Activated CD4-positive, alpha-beta T cell treated with anti-CD3 and anti-CD28 coated beads for 36 hours (primary cell): ENCODE measurements at regions of chr1 and their contacts with region 1.

Region 1: GRCh38 chr1:209747580-209748262 is 8.1 kb upstream of the TRAF3IP3 start:
- DNase-seq: peak; percentile 93
- ATAC-seq: peak; percentile 74
- H3K4me3 Mint-ChIP-seq: peak overlapping the region; percentile 65
- H3K27ac Mint-ChIP-seq: peak overlapping the region; percentile 92
- H3K4me1 Mint-ChIP-seq: peaks cover 70% of the 10 kb centered on the region
- H3K27me3 Mint-ChIP-seq: no peaks in the 10 kb centered on the region

Region 2: DNA sequence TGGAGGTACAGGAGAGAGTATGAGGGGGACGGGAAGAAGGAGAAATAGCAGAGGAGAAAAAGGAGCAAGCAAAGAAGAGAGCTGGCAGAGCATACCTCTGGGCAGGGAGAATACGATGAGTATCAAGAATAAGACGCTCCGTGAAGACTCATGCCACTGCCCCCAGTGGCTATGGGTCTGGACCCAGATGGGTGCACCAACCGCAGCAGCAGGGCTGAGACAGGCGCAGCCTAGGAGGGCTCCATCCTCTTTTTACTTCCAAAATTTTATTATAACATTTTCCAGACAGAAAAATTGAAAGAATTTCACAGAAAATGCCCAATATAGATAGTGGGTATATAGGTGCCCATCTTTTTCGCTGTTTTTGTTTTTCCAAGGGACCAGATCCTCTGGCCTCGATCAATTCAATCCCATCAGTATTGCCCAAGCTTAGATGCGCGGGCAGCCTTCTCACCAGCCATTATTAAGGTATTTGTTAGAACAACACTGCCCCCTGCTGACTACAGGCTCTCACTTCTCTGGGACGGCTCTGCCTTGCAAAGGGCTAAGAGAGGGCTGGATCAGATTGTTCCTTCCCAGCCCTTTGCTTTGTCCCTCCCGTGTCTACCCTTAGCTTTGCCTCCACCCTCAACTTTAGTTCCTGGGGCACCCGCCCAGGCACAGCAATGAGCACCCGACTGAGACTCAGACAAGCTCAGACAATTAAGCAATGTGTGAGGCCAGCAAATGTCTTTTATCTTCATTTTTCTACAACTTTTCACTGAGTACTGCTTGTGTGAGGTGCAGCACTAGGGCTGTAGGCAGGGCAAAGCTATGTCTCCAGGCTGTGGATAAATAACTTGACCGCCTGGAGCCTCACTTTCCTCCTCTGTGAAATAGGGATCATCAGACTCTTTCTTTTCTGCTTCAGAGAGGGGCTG is 181.7 kb before region 1 on chr1:
- CTCF ChIA-PET with region 1: interaction called, 13 read pairs
- POLR2A ChIA-PET with region 1: no interaction called
- intact Hi-C with region 1: loop called (anchors 1 kb)
- DNase-seq: peak; percentile 88
- ATAC-seq: peak; percentile 89
- H3K4me3 Mint-ChIP-seq: no peak overlapping the region
- H3K27ac Mint-ChIP-seq: no peak overlapping the region
- H3K4me1 Mint-ChIP-seq: peaks cover 21% of the 10 kb centered on the region
- H3K27me3 Mint-ChIP-seq: peaks cover 9% of the 10 kb centered on the region

Region 3: DNA sequence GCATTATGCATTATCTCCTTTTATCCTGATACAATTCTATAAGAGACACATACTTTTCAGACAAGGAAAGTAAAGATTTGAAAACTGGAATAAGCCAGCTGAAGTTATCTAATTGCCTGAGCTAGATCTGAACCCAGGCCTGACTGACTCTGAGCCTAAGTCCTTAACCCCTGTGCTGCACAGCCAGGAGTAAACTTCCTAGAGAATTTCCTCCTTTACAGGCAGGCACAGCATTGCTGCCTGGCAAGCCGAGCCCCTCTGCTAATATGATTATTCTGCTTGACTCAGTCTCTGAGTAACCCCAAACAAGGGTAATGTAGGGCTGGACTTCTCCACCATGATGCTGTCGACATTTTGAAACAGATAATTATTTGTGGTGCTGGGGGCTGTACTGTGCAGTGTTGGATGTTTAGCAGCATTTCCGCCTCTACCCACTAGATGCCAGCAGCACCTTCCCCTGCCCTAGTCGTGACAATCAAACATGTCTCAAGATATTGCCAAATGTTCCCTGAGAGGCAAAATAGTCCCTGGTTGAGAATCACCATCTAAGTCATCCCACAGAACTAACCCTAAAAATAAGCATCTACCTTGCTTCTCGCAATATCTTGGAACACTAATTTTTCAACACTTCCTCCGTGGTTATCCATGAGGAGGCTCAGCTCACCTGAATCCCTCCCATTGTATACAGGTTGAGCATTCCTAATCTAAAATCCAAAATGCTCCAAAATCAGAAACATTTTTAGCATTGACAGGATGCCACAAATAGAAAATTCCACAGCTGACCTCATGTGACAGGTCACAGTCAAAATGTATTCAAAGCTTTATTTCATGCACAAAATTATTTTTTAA is 145.7 kb before region 1 on chr1:
- CTCF ChIA-PET with region 1: interaction called, 6 read pairs
- POLR2A ChIA-PET with region 1: no interaction called
- intact Hi-C with region 1: loop called (anchors 1 kb)
- DNase-seq: peak; percentile 63
- ATAC-seq: peak; percentile 94
- H3K4me3 Mint-ChIP-seq: no peak overlapping the region
- H3K27ac Mint-ChIP-seq: no peak overlapping the region
- H3K4me1 Mint-ChIP-seq: peaks cover 3% of the 10 kb centered on the region
- H3K27me3 Mint-ChIP-seq: peaks cover 9% of the 10 kb centered on the region

Region 4: DNA sequence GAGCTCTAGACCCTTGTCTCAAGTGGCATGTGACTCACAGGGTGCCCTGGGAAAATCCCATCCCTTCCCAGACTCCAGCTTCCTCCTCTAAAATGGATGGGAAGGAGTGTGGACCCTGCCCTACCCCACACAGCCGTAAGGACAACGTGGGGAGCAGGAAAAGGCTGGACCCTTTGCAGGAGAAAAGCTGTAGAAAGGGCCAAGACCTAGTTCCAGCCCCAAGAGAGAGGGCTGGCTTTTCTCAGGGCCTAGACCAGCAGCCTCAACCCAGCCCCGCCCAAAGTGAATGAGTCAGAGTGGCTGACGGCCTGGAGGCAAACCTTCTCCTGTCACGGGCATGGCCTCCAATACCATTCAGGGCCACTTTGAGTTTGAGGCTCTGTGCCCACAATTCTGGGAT is 96.6 kb before region 1 on chr1:
- CTCF ChIA-PET with region 1: interaction called, 10 read pairs
- POLR2A ChIA-PET with region 1: no interaction called
- intact Hi-C with region 1: loop called (anchors 2 to 5 kb)
- DNase-seq: peak; percentile 84
- ATAC-seq: peak; percentile 91
- H3K4me3 Mint-ChIP-seq: no peak overlapping the region
- H3K27ac Mint-ChIP-seq: peak overlapping the region; percentile 73
- H3K4me1 Mint-ChIP-seq: peaks cover 54% of the 10 kb centered on the region
- H3K27me3 Mint-ChIP-seq: no peaks in the 10 kb centered on the region

Region 5: GRCh38 chr1:209692745-209693504 is 54.8 kb before region 1 on chr1:
- CTCF ChIA-PET with region 1: interaction called, 18 read pairs
- POLR2A ChIA-PET with region 1: interaction called, 4 read pairs
- intact Hi-C with region 1: loop called (anchors 1 kb)
- DNase-seq: peak; percentile 88
- ATAC-seq: peak; percentile 68
- H3K4me3 Mint-ChIP-seq: no peak overlapping the region
- H3K27ac Mint-ChIP-seq: peak overlapping the region; percentile 43
- H3K4me1 Mint-ChIP-seq: peaks cover 40% of the 10 kb centered on the region
- H3K27me3 Mint-ChIP-seq: no peaks in the 10 kb centered on the region

Region 6: GRCh38 chr1:209723756-209724693 is 23.7 kb before region 1 on chr1:
- CTCF ChIA-PET with region 1: interaction called, 12 read pairs
- POLR2A ChIA-PET with region 1: interaction called, 3 read pairs
- intact Hi-C with region 1: loop called (anchors 1 kb)
- DNase-seq: peak; percentile 72
- ATAC-seq: peak; percentile 88
- H3K4me3 Mint-ChIP-seq: peak overlapping the region; percentile 29
- H3K27ac Mint-ChIP-seq: peak overlapping the region; percentile 94
- H3K4me1 Mint-ChIP-seq: peaks cover 58% of the 10 kb centered on the region
- H3K27me3 Mint-ChIP-seq: no peaks in the 10 kb centered on the region

Region 7: GRCh38 chr1:209769171-209769904 is 21.6 kb after region 1 on chr1:
- CTCF ChIA-PET with region 1: interaction called, 75 read pairs
- POLR2A ChIA-PET with region 1: interaction called, 23 read pairs
- intact Hi-C with region 1: loop called (anchors 1 kb)
- DNase-seq: peak; percentile 88
- ATAC-seq: peak; percentile 67
- H3K4me3 Mint-ChIP-seq: no peak overlapping the region
- H3K27ac Mint-ChIP-seq: no peak overlapping the region
- H3K4me1 Mint-ChIP-seq: peaks cover 48% of the 10 kb centered on the region
- H3K27me3 Mint-ChIP-seq: no peaks in the 10 kb centered on the region